GM10248 (cell line): ENCODE measurements at regions of chr7 and their contacts with region 1.

Region 1: GRCh38 chr7:129066290-129067131 is 11.6 kb upstream of the TNPO3 start:
- DNase-seq: no peak
- CTCF ChIP-seq: no peak

Region 2: GRCh38 chr7:129054438-129055293 is 11.8 kb before region 1 on chr7 and contains the start of gene TNPO3:
- CTCF ChIA-PET with region 1: interaction called, 22 read pairs
- POLR2A ChIA-PET with region 1: no interaction called
- DNase-seq: peak; percentile 93
- CTCF ChIP-seq: no peak

Region 3: GRCh38 chr7:129144095-129144833 is 77.8 kb after region 1 on chr7 and contains the start of gene TSPAN33:
- CTCF ChIA-PET with region 1: no interaction called
- POLR2A ChIA-PET with region 1: no interaction called
- DNase-seq: peak; percentile 92
- CTCF ChIP-seq: no peak